Sigmoid colon (tissue), 7 donors: ENCODE measurements at regions of chr3 and their contacts with region 1.

Region 1: DNA sequence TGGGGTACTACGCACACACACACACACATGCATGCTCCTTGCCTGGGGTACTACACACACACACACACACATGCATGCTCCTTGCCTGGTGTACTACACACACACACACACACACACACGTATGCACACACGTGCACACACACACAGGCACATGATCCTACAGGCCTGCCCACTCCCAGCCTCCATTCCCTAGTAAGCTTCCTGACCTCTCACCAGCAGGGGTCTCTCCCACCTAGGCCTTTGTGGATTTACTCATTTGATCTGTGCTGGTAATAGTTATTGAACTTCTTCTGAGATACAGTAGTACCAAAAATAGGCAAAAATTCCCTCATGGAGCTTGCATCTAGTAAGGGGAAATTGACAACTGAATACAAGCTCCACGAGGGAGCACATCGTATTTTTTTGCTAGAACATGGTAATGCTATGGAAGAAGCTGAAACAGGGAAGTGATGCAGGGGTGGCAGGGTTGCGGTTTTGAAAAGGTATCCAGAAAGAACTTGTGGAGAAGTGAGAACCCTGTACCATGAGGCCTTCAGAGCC is 19.1 kb downstream of the TTC21A start:
- DNase-seq: peak; percentile 70
- H3K4me3 ChIP-seq: no peak overlapping the region
- H3K27ac ChIP-seq: peak overlapping the region in 1 of 4 donors; percentile 65
- H3K4me1 ChIP-seq: peaks cover 0 to 14% (median 10%) of the 10 kb centered on the region in 4 donors
- H3K27me3 ChIP-seq: no peaks in the 10 kb centered on the region
- CTCF ChIP-seq: peak; percentile 56 to 86 (median 67)
- EP300 ChIP-seq: no peak
- POLR2A ChIP-seq: no peak

Region 2: GRCh38 chr3:39189959-39190269 is 63.3 kb after region 1 on chr3:
- intact Hi-C with region 1: loop called (anchors 5 kb)
- DNase-seq: peak; percentile 75
- H3K4me3 ChIP-seq: no peak overlapping the region
- H3K27ac ChIP-seq: no peak overlapping the region
- H3K4me1 ChIP-seq: peaks cover 0 to 15% (median 4%) of the 10 kb centered on the region in 4 donors
- H3K27me3 ChIP-seq: no peaks in the 10 kb centered on the region
- CTCF ChIP-seq: peak; percentile 59 to 71 (median 69)
- EP300 ChIP-seq: no peak
- POLR2A ChIP-seq: no peak